Naive thymus-derived CD4-positive, alpha-beta T cell (primary cell): ENCODE measurements at regions of chr16 and their contacts with region 1.

Region 1: GRCh38 chr16:30142672-30143346 is 19.8 kb upstream of the MAPK3 start:
- DNase-seq: peak in 3 of 9 donors; percentile 17 to 38 (median 30)
- ATAC-seq: peak; percentile 74
- H3K4me3 ChIP-seq: no peak overlapping the region
- H3K4me3 Mint-ChIP-seq: no peak overlapping the region
- H3K27ac ChIP-seq: no peak overlapping the region
- H3K27ac Mint-ChIP-seq: peak overlapping the region; percentile 2 to 79 (median 32)
- H3K4me1 ChIP-seq: peaks cover 0 to 23% of the 10 kb centered on the region in 2 donors
- H3K4me1 Mint-ChIP-seq: peaks cover 21 to 33% (median 24%) of the 10 kb centered on the region in 7 donors
- H3K27me3 ChIP-seq: no peaks in the 10 kb centered on the region
- H3K27me3 Mint-ChIP-seq: no peaks in the 10 kb centered on the region

Region 2: DNA sequence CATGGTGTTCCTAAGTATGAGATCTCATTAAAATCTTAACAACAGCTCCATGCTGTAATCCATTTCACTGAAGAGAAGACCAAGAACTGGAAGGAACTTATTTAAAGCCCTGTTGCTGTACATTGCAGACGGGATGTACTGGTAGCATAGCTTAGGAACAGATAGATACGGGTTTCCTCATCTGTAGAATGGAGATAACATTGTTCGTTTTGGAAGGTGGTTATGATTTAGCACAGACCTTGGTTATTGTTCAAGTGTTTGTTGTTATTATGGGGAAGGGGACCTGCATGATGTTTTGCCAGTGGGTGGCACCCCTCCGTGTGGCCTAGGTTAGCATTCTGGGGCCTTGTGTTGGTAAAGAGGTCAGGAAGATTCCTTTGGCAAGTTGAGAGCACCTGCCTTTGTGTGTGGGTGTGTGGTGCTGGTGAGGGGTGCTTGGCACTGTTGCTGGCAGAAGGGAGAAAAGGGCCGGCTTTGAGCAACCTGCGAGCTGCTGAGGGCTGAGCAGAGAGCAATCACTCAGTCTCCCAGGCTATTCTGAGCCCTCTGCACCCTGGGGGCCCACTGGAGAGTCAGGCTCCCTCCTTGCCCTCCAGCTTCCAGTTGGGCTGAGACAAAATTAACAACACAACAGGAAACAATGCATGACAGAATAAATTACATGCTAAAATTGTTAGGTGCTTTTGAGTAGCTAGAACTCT is 166.8 kb before region 1 on chr16:
- CTCF ChIA-PET with region 1: no interaction called
- POLR2A ChIA-PET with region 1: no interaction called
- intact Hi-C with region 1: no loop called
- DNase-seq: no peak
- ATAC-seq: no peak
- H3K4me3 ChIP-seq: no peak overlapping the region
- H3K4me3 Mint-ChIP-seq: peak overlapping the region; percentile 80 to 97 (median 94)
- H3K27ac ChIP-seq: peak overlapping the region; percentile 78
- H3K27ac Mint-ChIP-seq: peak overlapping the region; percentile 62 to 91 (median 82)
- H3K4me1 ChIP-seq: peaks cover 20 to 23% of the 10 kb centered on the region in 2 donors
- H3K4me1 Mint-ChIP-seq: peaks cover 23 to 39% (median 37%) of the 10 kb centered on the region in 7 donors
- H3K27me3 ChIP-seq: no peaks in the 10 kb centered on the region
- H3K27me3 Mint-ChIP-seq: no peaks in the 10 kb centered on the region

Region 3: DNA sequence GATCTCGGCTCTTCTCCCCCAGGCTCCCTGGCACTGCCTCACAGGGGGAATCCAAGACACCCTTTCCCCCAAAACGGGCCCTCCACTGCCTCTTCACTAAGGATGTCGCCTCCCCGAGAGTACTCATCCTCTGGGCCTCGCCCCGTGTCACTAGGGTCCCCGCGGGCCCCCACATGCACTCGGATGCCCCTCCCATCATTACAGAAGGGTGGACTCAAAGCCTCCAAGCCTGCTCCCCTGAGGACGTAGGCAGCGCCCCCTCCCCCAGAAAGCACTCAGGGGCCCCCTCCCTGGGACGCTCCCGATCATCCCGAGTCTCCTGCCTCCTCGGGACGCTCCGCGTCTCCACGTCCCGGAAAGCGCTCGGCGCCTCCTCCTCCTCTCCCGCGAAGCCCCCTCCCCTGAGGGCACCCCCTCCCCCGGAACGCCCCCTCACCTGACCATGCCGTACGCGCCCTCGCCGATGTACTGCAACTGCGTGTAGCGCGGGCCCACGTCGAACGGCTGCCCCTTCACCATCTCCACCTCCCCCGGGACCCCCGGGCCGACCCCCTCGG is 20.1 kb before region 1 on chr16:
- CTCF ChIA-PET with region 1: no interaction called
- POLR2A ChIA-PET with region 1: interaction called, 3 read pairs
- intact Hi-C with region 1: loop called in 1 of 2 experiments (anchors 2 kb)
- DNase-seq: peak in 2 of 9 donors; percentile 19 to 35
- ATAC-seq: peak; percentile 2
- H3K4me3 ChIP-seq: peak overlapping the region; percentile 68
- H3K4me3 Mint-ChIP-seq: peak overlapping the region; percentile 82 to 94 (median 88)
- H3K27ac ChIP-seq: peak overlapping the region; percentile 89
- H3K27ac Mint-ChIP-seq: peak overlapping the region; percentile 75 to 93 (median 85)
- H3K4me1 ChIP-seq: peaks cover 6 to 13% of the 10 kb centered on the region in 2 donors
- H3K4me1 Mint-ChIP-seq: peaks cover 20 to 39% (median 27%) of the 10 kb centered on the region in 7 donors
- H3K27me3 ChIP-seq: no peaks in the 10 kb centered on the region
- H3K27me3 Mint-ChIP-seq: no peaks in the 10 kb centered on the region

Region 4: GRCh38 chr16:30163538-30163937 is 20.7 kb after region 1 on chr16:
- CTCF ChIA-PET with region 1: no interaction called
- POLR2A ChIA-PET with region 1: no interaction called
- intact Hi-C with region 1: no loop called
- DNase-seq: no peak
- ATAC-seq: no peak
- H3K4me3 ChIP-seq: no peak overlapping the region
- H3K4me3 Mint-ChIP-seq: peak overlapping the region in 1 of 10 donors; percentile 34
- H3K27ac ChIP-seq: no peak overlapping the region
- H3K27ac Mint-ChIP-seq: peak overlapping the region in 3 of 9 donors; percentile 3 to 51 (median 17)
- H3K4me1 ChIP-seq: no peaks in the 10 kb centered on the region
- H3K4me1 Mint-ChIP-seq: peaks cover 20 to 45% (median 39%) of the 10 kb centered on the region in 7 donors
- H3K27me3 ChIP-seq: no peaks in the 10 kb centered on the region
- H3K27me3 Mint-ChIP-seq: no peaks in the 10 kb centered on the region

Region 5: GRCh38 chr16:31489616-31490584 is 1347.1 kb after region 1 on chr16:
- CTCF ChIA-PET with region 1: no interaction called
- POLR2A ChIA-PET with region 1: no interaction called
- intact Hi-C with region 1: no loop called
- DNase-seq: no peak
- ATAC-seq: no peak
- H3K4me3 ChIP-seq: no peak overlapping the region
- H3K4me3 Mint-ChIP-seq: peak overlapping the region in 9 of 10 donors; percentile 30 to 71 (median 42)
- H3K27ac ChIP-seq: no peak overlapping the region
- H3K27ac Mint-ChIP-seq: peak overlapping the region in 7 of 9 donors; percentile 25 to 72 (median 53)
- H3K4me1 ChIP-seq: no peaks in the 10 kb centered on the region
- H3K4me1 Mint-ChIP-seq: peaks cover 5 to 24% (median 13%) of the 10 kb centered on the region in 7 donors
- H3K27me3 ChIP-seq: no peaks in the 10 kb centered on the region
- H3K27me3 Mint-ChIP-seq: peaks cover 0 to 17% (median 0%) of the 10 kb centered on the region in 5 donors